Heart right ventricle (tissue), 16 donors: ENCODE measurements at regions of chr6 and their contacts with region 1.

Region 1: GRCh38 chr6:18392346-18392884 is 5.3 kb downstream of the RNF144B start:
- DNase-seq: no peak
- ATAC-seq: no peak
- H3K4me3 ChIP-seq: no peak overlapping the region
- H3K27ac ChIP-seq: no peak overlapping the region
- H3K4me1 ChIP-seq: peaks cover 0 to 83% (median 26%) of the 10 kb centered on the region in 9 donors
- H3K27me3 ChIP-seq: no peaks in the 10 kb centered on the region
- CTCF ChIP-seq: no peak

Region 2: DNA sequence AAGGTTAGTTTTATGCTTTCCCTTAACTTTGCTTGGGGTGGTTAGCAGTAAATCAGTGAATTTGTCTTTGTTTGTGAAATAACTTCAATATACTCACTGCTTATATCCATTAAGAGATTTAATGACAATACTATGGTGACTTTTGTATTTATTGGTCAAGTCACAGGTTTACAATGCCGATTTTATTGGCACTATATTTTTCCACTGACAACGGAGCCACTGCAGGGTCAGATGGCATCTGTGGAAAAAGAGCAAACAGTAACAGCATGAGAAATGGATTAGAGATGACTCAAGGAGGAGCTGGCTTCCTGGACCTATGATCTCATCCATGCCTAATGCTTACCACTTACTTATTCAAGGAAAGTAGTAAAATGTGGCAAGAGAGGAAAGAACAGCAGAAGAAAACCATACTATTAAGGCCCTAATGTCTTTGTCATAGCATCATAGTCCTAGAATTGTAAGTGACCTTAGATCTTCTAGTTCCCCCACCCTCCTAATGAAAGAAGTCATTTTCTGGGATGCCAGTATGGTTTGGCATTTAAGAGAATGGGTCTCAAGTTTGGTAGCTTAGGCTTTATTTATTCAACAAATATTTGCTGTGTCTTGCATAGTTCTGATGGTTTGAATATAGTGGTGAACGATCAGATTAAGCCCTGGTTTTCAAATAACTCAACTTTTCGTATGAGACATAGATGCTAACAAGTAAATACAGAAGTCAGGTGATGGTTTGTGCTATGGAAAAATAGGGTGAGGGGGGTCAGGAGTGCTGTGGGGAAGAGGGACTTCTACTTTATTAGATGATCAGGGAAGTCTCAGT is 13.3 kb after region 1 on chr6:
- intact Hi-C with region 1: no loop called
- DNase-seq: no peak
- ATAC-seq: peak in 1 of 8 donors; percentile 50
- H3K4me3 ChIP-seq: no peak overlapping the region
- H3K27ac ChIP-seq: peak overlapping the region in 1 of 10 donors; percentile 40
- H3K4me1 ChIP-seq: peaks cover 0 to 50% (median 6%) of the 10 kb centered on the region in 9 donors
- H3K27me3 ChIP-seq: no peaks in the 10 kb centered on the region
- CTCF ChIP-seq: no peak

Region 3: GRCh38 chr6:18457065-18457812 is 64.8 kb after region 1 on chr6:
- intact Hi-C with region 1: loop called in 1 of 10 experiments (anchors 10 kb)
- DNase-seq: no peak
- ATAC-seq: no peak
- H3K4me3 ChIP-seq: no peak overlapping the region
- H3K27ac ChIP-seq: no peak overlapping the region
- H3K4me1 ChIP-seq: peaks cover 0 to 22% (median 5%) of the 10 kb centered on the region in 9 donors
- H3K27me3 ChIP-seq: no peaks in the 10 kb centered on the region
- CTCF ChIP-seq: no peak